ENCODE measurements at regions of chr3 and their contacts with region 1.

Region 1: DNA sequence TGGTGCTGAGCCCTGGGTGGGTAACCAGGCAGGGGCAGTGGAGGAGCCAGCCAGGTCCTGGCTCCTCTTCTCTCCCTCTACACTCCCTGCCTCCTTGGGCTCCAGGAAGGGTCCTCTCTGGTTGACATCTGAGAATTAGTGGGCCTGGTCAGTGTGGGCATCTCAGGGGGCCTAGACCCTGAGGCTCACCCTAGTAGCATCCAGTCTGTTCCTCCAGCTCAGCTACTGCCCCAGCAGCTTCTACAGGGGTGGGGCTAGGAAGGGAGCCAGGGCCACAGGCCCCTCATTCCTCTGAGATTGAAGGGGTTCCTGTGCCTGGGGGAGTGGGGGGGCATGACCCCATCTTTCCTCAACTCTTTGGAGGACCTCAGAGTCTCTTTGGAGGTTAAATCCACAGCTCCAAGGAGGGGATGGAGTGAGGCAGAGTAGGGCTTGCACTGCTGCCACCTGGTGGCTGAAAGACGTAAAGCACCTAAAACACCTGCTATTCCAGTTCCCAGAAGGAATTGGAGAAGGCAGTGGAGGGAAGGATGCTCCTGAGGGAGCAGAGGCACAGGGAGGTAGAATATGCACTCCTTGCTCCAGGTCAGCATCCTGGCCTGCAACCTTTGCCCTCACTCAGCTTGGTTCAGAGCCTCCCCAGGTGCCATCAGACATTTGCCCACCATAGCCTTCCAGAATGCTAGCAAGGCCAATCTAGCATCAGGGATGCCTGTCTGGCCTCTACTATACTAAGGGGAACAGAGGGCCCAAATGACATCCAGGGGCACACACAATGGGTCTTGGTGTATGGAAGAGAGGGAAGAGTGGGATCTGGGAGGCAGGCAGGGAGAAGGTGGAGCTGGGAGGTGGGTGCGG is 25.1 kb downstream of the C3orf18 start:
- DNase-seq: peak in 1 of 2 donors; percentile 76
- H3K4me3 ChIP-seq: no peak overlapping the region
- H3K27ac ChIP-seq: no peak overlapping the region
- H3K4me1 ChIP-seq: no peaks in the 10 kb centered on the region
- H3K27me3 ChIP-seq: no peaks in the 10 kb centered on the region
- CTCF ChIP-seq: peak; percentile 79 to 87 (median 84)

Region 2: GRCh38 chr3:50436114-50436674 is 106.2 kb before region 1 on chr3:
- intact Hi-C with region 1: loop called (anchors 1 kb)
- DNase-seq: peak in 1 of 2 donors; percentile 72
- H3K4me3 ChIP-seq: no peak overlapping the region
- H3K27ac ChIP-seq: no peak overlapping the region
- H3K4me1 ChIP-seq: no peaks in the 10 kb centered on the region
- H3K27me3 ChIP-seq: no peaks in the 10 kb centered on the region
- CTCF ChIP-seq: peak; percentile 67 to 74 (median 72)

Region 3: DNA sequence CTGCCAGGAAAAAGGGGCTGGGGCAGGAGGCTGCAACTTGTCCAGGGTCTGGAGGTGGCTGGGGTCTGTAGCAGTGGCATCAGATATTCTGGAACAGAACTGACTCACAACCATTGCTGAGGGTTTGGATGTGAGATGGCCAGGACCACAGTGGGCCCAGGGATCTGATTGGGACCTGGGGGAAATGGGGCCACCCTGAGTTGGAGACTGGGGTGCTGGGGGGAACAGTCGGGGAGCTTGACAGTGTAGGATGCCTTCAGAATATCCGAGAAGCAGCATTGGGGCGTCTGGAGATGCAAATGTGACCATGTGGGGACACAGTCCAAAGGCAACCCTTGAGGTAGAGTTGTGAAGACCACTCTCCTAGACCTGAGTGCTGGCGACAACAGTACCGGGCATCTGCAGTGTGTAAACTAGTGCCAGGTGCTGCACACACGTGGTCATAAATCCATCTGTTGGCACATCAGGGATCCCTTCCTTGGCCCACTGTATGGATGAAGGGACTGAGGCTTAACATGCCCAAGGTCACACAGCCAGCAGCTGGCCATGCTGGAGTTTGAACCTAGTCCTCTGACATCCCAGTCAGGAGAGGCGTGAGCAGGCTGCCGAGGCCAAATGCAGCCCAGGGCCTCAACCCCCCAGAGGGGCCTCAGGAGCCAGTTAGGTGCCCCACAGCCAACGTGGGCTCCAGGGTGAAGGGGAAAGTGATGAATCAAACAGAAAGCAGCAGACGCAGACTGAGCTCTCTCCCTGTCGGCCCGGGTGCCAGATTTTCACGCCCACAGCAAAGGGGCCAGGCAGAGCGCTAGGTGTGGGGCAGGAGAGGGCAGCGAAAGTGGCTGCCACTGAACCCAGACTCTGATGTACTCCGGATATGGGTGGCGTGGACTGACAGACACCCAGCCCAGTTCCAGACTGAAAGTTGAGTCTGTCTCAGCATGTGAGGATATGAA is 45.7 kb after region 1 on chr3:
- intact Hi-C with region 1: no loop called
- DNase-seq: no peak
- H3K4me3 ChIP-seq: no peak overlapping the region
- H3K27ac ChIP-seq: no peak overlapping the region
- H3K4me1 ChIP-seq: peaks cover 0 to 8% of the 10 kb centered on the region in 2 donors
- H3K27me3 ChIP-seq: no peaks in the 10 kb centered on the region
- CTCF ChIP-seq: no peak

Measured in ascending aorta (tissue), 2 donors.